ENCODE measurements at regions of chr1 and their contacts with region 1.

Region 1: GRCh38 chr1:59354709-59355337 is 57.9 kb downstream of the FGGY start:
- DNase-seq: no peak
- ATAC-seq: no peak
- H3K4me3 ChIP-seq: no peak overlapping the region
- H3K27ac ChIP-seq: no peak overlapping the region
- H3K4me1 ChIP-seq: peaks cover 2% of the 10 kb centered on the region; the same call in 1 of the 2 replicates
- H3K27me3 ChIP-seq: no peaks in the 10 kb centered on the region
- CTCF ChIP-seq: no peak
- POLR2A ChIP-seq: no peak
- RAD21 ChIP-seq: no peak

Region 2: GRCh38 chr1:59323879-59324278 is 30.9 kb before region 1 on chr1:
- CTCF ChIA-PET with region 1: no interaction called
- POLR2A ChIA-PET with region 1: no interaction called
- dilution Hi-C with region 1: no loop called
- in situ Hi-C with region 1: no loop called
- intact Hi-C with region 1: loop called (anchors 5 kb)
- DNase-seq: peak; percentile 36
- ATAC-seq: no peak
- H3K4me3 ChIP-seq: no peak overlapping the region
- H3K27ac ChIP-seq: no peak overlapping the region
- H3K4me1 ChIP-seq: no peaks in the 10 kb centered on the region
- H3K27me3 ChIP-seq: no peaks in the 10 kb centered on the region
- CTCF ChIP-seq: no peak
- POLR2A ChIP-seq: no peak
- RAD21 ChIP-seq: no peak

Measured in IMR-90 (cell line).